Dendritic cell treated with granulocyte-macrophage colony-stimulating factor and Interleukin-4, amounts not matched to agents 40 ng/mL and 50 ng/mL, for 4 days (primary cell): ENCODE measurements at regions of chr3 and their contacts with region 1.

Region 1: DNA sequence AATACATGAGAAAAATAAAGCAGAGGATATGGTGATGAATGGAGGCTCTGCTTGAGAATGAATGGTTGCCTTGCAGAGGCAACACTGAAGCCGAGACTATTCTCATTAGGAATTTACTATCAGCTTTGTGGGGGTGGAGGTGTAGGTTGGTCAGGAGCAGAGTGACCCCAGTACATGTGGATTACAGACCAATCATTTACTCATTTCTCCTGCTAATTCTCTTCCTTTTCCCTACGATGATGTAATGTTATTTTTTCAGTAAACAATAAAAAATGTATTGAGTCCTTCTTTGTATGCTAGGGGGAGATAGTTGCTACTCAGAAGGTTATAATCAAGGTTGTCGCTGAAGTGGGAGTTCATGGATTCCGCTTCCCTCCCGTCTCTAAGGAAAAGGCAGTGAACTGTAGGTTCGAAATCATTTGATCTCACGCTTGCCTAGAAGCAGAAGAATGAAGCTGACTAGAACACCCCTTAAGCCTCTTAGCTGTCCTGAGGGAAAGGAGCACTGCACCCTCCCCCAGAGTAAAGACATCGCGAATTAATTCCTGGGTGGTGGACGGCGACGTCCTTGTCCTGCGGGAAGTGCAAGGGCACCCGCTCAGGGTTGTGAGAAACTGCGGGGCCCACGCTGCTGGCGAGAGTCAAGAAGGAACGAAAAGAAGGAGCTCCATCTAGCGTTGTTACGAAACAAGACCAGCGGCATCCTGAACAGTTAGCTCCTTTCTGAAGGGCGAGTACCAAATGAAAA is 213.2 kb upstream of the PFN2 start:
- H3K4me3 Mint-ChIP-seq: no peak overlapping the region
- H3K27ac Mint-ChIP-seq: no peak overlapping the region
- H3K4me1 Mint-ChIP-seq: no peaks in the 10 kb centered on the region
- H3K27me3 Mint-ChIP-seq: peaks cover 12% of the 10 kb centered on the region

Region 2: GRCh38 chr3:149936812-149937233 is 247.0 kb before region 1 on chr3:
- intact Hi-C with region 1: loop called (anchors 2 kb)
- H3K4me3 Mint-ChIP-seq: no peak overlapping the region
- H3K27ac Mint-ChIP-seq: no peak overlapping the region
- H3K4me1 Mint-ChIP-seq: peaks cover 35% of the 10 kb centered on the region
- H3K27me3 Mint-ChIP-seq: no peaks in the 10 kb centered on the region

Region 3: DNA sequence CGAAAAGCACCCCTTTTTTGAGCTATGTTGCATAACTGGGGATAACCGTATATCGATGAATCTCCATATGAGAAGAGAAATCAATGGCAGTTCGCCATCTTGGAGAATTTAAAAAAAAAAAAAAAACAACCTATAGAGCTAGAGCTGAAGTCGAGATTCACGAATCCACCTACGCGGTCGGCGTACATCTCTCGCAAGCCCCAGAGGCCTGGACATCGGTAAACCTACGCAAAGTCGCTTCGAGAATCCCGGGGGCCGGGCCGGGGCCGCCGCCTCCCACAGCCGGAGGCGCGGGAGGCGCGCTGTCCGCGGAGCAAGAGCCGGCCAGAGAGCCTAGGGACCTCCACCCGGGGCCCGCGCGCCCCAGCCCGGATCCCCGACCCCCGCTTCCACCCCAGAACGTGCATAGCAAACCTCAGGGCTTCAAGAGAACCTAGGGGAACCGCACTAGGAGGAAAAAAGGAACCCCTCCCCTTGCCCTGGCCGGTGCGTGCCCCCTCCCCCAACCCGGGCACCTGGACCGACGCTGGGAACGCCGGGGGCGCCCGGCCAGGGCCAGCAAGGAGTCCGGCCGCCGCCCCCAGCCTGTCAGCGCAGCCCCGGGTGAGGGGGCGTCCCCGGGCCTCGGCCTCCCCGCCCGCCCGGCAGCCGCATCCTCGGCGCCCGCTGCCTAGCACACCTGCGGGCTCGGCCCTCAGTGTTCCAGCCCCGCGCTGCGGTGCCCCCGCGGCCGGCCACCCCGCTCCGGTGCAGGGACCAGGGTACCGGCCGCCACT is 213.7 kb before region 1 on chr3:
- intact Hi-C with region 1: loop called (anchors 2 kb)
- H3K4me3 Mint-ChIP-seq: peak overlapping the region; percentile 76
- H3K27ac Mint-ChIP-seq: no peak overlapping the region
- H3K4me1 Mint-ChIP-seq: peaks cover 20% of the 10 kb centered on the region
- H3K27me3 Mint-ChIP-seq: peaks cover 51% of the 10 kb centered on the region